Aorta (tissue), 5 donors: ENCODE measurements at regions of chr17 and their contacts with region 1.

Region 1: DNA sequence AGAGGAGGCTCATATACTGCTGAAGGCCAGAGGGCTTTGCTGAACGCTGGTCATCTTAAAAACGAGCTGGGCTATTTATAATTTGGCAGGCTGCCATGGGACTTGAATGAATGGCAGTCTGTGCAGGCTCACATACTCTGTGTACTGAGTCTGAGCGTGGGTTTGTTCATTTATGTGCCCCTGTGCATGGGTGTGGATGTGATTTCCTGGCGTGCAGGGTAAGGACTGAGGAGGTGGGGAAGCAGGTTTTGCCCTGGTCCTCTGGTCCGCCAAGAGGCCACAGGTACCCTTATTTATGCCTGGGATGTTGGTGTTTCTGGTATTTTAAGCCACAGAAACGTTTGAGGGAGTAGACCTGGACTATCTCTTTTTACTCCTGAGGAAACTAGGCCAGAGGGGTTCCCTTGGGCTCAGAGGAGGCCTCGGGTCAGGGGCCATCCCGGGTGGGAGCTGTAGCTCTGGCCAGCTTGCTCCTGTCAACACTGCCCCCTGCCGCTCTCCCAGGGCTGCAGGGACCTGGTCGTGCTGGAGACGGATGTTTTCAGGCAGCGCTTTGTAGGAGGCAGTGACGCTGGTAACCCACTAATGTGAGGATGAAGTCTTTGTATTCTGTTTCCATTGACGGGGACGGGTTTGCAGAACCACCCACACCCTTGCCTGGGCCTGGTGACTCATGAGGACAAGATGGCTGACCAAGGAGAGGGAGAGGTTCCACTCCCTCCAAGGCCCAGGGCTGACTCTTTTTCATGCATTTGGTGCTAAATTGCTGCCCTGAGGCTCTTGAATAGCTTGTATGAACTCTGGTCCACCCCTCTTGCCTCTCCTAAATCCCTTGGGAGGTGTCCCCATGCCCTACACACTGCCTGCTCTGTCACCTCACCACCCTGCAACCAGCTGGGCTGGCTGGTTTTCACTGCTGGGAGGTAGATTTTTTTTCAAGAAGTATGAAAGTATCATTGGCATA is 184.5 kb downstream of the MSI2 start:
- DNase-seq: peak; percentile 69 to 77
- ATAC-seq: peak; percentile 74
- H3K4me3 ChIP-seq: no peak overlapping the region
- H3K27ac ChIP-seq: peak overlapping the region in 1 of 2 donors; percentile 41
- H3K4me1 ChIP-seq: peaks cover 0 to 3% of the 10 kb centered on the region in 2 donors
- H3K27me3 ChIP-seq: no peaks in the 10 kb centered on the region

Region 2: DNA sequence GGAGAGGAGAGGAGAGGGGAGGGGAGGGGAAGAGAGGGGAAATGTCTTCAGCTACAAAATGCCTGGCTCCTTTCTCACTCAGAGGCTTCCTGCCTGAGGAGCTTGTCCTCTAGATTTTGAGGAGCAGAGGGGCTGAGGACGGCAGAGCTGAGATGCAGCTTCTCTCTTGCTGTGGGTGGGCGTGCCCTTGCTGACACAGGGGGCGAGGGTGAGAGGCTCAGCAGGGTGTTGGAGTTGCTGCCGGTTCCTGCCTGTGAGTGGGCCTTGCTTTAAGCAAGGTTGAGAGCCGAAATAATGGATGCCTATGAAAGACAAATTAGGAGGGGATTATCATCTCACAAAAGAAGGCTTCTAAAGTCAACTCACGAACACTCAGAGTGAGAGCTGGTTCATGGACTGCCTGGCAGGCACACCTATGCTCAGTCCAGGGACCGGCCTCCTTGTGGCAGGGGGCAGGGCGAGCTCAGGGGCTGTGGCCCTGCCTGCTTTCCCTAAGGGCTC is 31.1 kb after region 1 on chr17:
- intact Hi-C with region 1: loop called in 1 of 2 experiments (anchors 2 kb)
- DNase-seq: no peak
- ATAC-seq: no peak
- H3K4me3 ChIP-seq: no peak overlapping the region
- H3K27ac ChIP-seq: no peak overlapping the region
- H3K4me1 ChIP-seq: no peaks in the 10 kb centered on the region
- H3K27me3 ChIP-seq: no peaks in the 10 kb centered on the region

Region 3: DNA sequence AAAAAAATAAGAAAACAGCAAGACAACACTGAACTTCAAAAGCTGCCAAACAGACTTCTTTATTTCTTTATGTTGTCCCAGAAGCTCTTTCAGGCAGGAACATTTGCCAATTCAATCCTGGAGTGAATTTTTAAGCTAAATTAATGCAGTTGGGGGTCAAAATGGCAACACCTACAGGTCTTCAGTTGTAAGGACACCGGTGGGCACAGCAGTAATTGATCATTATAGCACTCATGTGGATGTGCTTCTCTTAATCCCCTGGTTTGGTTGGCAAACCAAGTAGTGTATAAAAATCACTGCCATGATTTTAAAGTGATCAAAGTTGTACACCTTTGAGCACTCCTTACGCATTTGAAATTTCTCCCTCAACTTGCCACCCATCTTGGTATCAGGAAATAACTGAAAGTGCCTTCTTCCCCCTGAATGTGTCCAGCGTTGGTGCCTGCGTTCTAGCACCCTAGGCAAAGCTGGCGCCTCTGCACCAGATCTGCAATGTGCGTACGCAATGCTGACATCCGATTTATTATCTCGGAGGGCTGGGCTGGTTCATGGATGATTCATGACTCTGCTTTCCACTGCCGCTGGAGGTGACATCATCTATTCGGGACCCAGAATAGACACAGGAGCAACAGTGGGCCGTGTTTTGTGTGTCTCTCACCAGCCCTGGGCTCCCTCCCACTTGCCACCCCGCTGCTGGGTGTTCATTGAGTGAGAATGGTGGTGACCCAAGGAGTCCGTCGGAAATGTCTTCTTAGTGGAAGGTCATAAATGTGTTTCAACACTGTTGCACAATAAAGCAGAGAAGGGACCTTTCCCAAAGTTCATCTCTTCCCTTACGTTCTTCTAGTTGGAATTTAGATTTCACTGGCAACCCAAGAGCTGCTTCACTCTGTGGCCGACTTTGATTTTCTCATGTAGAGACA is 100.9 kb after region 1 on chr17:
- intact Hi-C with region 1: loop called in 1 of 2 experiments (anchors 1 kb)
- DNase-seq: peak; percentile 76 to 86
- ATAC-seq: peak; percentile 85
- H3K4me3 ChIP-seq: no peak overlapping the region
- H3K27ac ChIP-seq: no peak overlapping the region
- H3K4me1 ChIP-seq: no peaks in the 10 kb centered on the region
- H3K27me3 ChIP-seq: no peaks in the 10 kb centered on the region